Cardiac septum (tissue), 1 donor: ENCODE measurements at regions of chr12 and their contacts with region 1.

Region 1: GRCh38 chr12:3083921-3084347 is 6.8 kb downstream of the TSPAN9 start:
- DNase-seq: no peak

Region 2: GRCh38 chr12:3122835-3123678 is 39.1 kb after region 1 on chr12:
- intact Hi-C with region 1: loop called (anchors 5 kb)
- DNase-seq: peak; percentile 84